ENCODE measurements at regions of chr9 and their contacts with region 1.

Region 1: GRCh38 chr9:76302947-76303940 is 91.0 kb downstream of the RFK start:
- DNase-seq: no peak
- H3K4me3 ChIP-seq: no peak overlapping the region
- H3K27ac ChIP-seq: no peak overlapping the region
- H3K4me1 ChIP-seq: peaks cover 0 to 5% (median 4%) of the 10 kb centered on the region in 4 donors
- H3K27me3 ChIP-seq: peaks cover 0 to 4% (median 0%) of the 10 kb centered on the region in 3 donors
- CTCF ChIP-seq: peak; percentile 15 to 69 (median 62)
- EP300 ChIP-seq: no peak
- POLR2A ChIP-seq: no peak

Region 2: DNA sequence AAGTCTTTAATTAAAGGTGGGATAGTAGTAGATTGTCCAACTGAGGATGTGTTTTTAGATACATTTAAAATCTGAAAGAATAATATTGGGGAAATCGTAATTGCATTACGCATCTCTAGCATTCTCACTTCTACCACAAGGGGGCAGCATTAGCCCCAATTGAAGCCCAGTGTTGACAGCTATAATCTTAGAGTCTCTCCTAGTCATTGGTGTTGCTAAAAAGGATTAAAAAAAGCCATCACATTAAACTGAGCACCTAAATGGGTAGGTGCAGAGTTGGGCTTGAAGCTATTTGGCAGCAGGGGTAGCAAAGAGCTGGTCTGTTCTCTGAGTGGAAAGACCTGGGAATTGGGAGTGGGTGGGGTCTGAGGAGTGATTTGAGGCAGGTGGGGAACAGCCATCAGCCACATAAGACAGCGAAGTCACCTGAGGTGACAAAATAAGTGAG is 1037.7 kb before region 1 on chr9:
- intact Hi-C with region 1: loop called (anchors 2 kb)
- DNase-seq: no peak
- H3K4me3 ChIP-seq: no peak overlapping the region
- H3K27ac ChIP-seq: no peak overlapping the region
- H3K4me1 ChIP-seq: no peaks in the 10 kb centered on the region
- H3K27me3 ChIP-seq: no peaks in the 10 kb centered on the region
- CTCF ChIP-seq: peak in 3 of 4 experiments; percentile 57 to 74 (median 62)
- EP300 ChIP-seq: no peak
- POLR2A ChIP-seq: no peak

Region 3: DNA sequence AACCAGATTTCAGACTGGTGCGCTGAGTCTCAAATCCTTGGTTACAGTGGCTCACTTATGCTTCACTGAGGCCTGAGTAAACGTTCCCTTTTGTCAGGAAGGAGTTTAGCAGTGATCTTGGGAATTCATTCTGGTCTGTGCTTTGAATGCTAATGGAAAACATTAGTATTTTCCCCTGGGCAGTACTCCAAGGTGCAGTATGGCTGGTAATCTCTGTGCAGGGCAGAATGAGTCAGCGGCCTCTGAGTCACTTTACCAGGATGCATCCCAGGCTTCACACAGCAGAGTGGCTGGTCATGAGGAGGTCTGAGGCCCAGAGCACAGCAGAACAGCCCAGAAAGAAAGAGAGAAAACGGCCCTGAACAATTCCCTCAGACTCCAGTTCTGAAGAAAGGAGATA is 515.0 kb after region 1 on chr9:
- intact Hi-C with region 1: no loop called
- DNase-seq: peak; percentile 95
- H3K4me3 ChIP-seq: no peak overlapping the region
- H3K27ac ChIP-seq: peak overlapping the region; percentile 81 to 94 (median 87)
- H3K4me1 ChIP-seq: peaks cover 0 to 71% (median 51%) of the 10 kb centered on the region in 4 donors
- H3K27me3 ChIP-seq: no peaks in the 10 kb centered on the region
- CTCF ChIP-seq: no peak
- EP300 ChIP-seq: peak in 3 of 4 donors; percentile 14 to 96 (median 58)
- POLR2A ChIP-seq: no peak

Measured in sigmoid colon (tissue), 7 donors.